Activated CD8-positive, alpha-beta T cell treated with anti-CD3 and anti-CD28 coated beads for 36 hours (primary cell): ENCODE measurements at regions of chr6 and their contacts with region 1.

Region 1: GRCh38 chr6:37018198-37019064 is 13.0 kb downstream of the FGD2 start:
- DNase-seq: peak; percentile 96
- ATAC-seq: peak; percentile 95
- H3K4me3 Mint-ChIP-seq: peak overlapping the region; percentile 26
- H3K27ac Mint-ChIP-seq: peak overlapping the region; percentile 66
- H3K4me1 Mint-ChIP-seq: peaks cover 40% of the 10 kb centered on the region
- H3K27me3 Mint-ChIP-seq: no peaks in the 10 kb centered on the region
- CTCF ChIP-seq: peak; percentile 99

Region 2: GRCh38 chr6:36780442-36781177 is 237.8 kb before region 1 on chr6:
- CTCF ChIA-PET with region 1: interaction called, 25 read pairs
- POLR2A ChIA-PET with region 1: no interaction called
- intact Hi-C with region 1: no loop called
- DNase-seq: no peak
- ATAC-seq: no peak
- H3K4me3 Mint-ChIP-seq: no peak overlapping the region
- H3K27ac Mint-ChIP-seq: no peak overlapping the region
- H3K4me1 Mint-ChIP-seq: peaks cover 2% of the 10 kb centered on the region
- H3K27me3 Mint-ChIP-seq: peaks cover 1% of the 10 kb centered on the region
- CTCF ChIP-seq: no peak

Region 3: DNA sequence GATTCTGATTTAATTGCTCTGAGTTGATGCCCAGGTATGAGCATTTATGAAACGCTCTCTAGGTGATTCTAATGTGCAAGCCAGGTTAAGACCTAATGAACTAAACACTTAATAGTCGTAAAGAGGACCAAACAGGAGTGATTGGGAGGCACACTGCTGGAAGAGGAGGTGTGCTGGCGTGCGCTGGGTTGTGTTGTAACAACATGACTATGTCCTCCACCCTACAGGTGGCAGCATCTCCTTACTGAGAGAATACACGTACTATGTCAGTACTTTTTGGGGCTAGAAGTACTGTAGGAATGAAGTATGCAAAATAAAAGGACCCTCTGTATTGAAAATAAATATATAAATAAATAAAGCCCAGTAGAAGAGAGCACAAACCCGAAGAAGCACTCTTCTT is 120.8 kb before region 1 on chr6:
- CTCF ChIA-PET with region 1: interaction called, 16 read pairs
- POLR2A ChIA-PET with region 1: no interaction called
- intact Hi-C with region 1: no loop called
- DNase-seq: peak; percentile 37
- ATAC-seq: peak; percentile 53
- H3K4me3 Mint-ChIP-seq: no peak overlapping the region
- H3K27ac Mint-ChIP-seq: no peak overlapping the region
- H3K4me1 Mint-ChIP-seq: peaks cover 3% of the 10 kb centered on the region
- H3K27me3 Mint-ChIP-seq: no peaks in the 10 kb centered on the region
- CTCF ChIP-seq: peak; percentile 28

Region 4: DNA sequence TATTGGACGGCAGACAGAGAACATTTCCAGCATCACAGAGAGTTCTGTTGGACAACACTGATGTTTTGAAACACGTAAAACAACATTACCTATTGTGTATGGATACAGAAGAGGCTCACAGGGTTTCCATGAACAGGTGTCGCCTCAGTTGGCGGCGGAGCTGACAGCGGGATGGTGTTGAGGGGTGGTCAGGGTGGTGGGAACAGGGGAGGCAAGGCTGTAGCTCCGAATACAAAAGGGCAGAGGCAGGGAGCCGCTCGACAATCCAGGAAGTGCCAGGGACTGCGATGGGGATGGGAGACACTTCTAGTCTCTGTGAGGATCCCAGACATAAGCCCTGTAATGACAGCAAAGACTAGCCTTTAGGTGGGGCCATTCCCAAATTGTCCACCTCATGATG is 78.4 kb before region 1 on chr6:
- CTCF ChIA-PET with region 1: no interaction called
- POLR2A ChIA-PET with region 1: no interaction called
- intact Hi-C with region 1: no loop called
- DNase-seq: no peak
- ATAC-seq: no peak
- H3K4me3 Mint-ChIP-seq: no peak overlapping the region
- H3K27ac Mint-ChIP-seq: no peak overlapping the region
- H3K4me1 Mint-ChIP-seq: peaks cover 4% of the 10 kb centered on the region
- H3K27me3 Mint-ChIP-seq: no peaks in the 10 kb centered on the region
- CTCF ChIP-seq: no peak

Region 5: GRCh38 chr6:37005061-37005810 is 13.2 kb before region 1 on chr6 and contains the start of gene FGD2:
- CTCF ChIA-PET with region 1: interaction called, 30 read pairs
- POLR2A ChIA-PET with region 1: interaction called, 5 read pairs
- intact Hi-C with region 1: no loop called
- DNase-seq: no peak
- ATAC-seq: peak; percentile 46
- H3K4me3 Mint-ChIP-seq: no peak within 1 kb of the TSS
- H3K27ac Mint-ChIP-seq: no peak within 1 kb of the TSS
- H3K4me1 Mint-ChIP-seq: peaks cover 14% of the 10 kb centered on the region
- H3K27me3 Mint-ChIP-seq: no peaks in the 10 kb centered on the region
- CTCF ChIP-seq: no peak
- total RNA-seq, gene FGD2: 1.4 to 1.6 TPM

Region 6: GRCh38 chr6:37119387-37119886 is 101.0 kb after region 1 on chr6:
- CTCF ChIA-PET with region 1: no interaction called
- POLR2A ChIA-PET with region 1: no interaction called
- intact Hi-C with region 1: no loop called
- DNase-seq: no peak
- ATAC-seq: no peak
- H3K4me3 Mint-ChIP-seq: no peak overlapping the region
- H3K27ac Mint-ChIP-seq: no peak overlapping the region
- H3K4me1 Mint-ChIP-seq: no peaks in the 10 kb centered on the region
- H3K27me3 Mint-ChIP-seq: no peaks in the 10 kb centered on the region
- CTCF ChIP-seq: no peak

Region 7: GRCh38 chr6:37190159-37190535 is 171.7 kb after region 1 on chr6:
- CTCF ChIA-PET with region 1: interaction called, 19 read pairs
- POLR2A ChIA-PET with region 1: no interaction called
- intact Hi-C with region 1: no loop called
- DNase-seq: peak; percentile 52
- ATAC-seq: peak; percentile 63
- H3K4me3 Mint-ChIP-seq: no peak overlapping the region
- H3K27ac Mint-ChIP-seq: peak overlapping the region; percentile 77
- H3K4me1 Mint-ChIP-seq: peaks cover 72% of the 10 kb centered on the region
- H3K27me3 Mint-ChIP-seq: no peaks in the 10 kb centered on the region
- CTCF ChIP-seq: no peak

Region 8: DNA sequence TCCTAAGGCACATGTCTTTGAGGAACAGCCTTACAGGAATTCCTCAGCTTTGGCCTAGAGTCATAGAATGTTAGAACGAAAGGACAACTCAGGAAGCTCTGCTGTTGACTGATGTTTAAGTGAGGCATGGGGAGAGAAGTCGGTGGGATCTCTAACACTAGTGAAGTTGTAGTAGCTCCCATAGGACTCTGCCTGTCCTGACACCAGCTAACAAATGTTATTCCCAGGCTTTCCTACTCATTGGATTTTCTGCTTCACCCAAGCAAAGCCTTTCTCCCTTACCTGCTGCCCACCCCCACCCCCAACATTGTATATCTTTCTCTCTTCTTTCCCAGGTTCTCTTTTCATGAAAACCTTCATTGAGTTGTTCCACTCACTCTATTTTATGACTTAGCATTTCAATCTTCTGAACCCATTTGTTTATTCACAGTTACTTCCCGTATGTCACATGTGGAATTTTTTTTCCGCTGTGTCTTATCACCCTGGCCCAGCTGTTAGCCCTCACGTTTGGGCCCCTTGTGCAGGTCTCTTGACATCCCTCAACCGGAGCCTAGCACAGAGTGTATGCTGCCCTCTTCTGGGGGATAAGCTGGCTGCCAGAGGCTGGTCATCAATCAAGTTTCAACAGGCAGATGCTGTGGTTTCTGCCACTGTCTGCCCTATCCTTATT is 296.2 kb after region 1 on chr6:
- CTCF ChIA-PET with region 1: interaction called, 24 read pairs
- POLR2A ChIA-PET with region 1: no interaction called
- intact Hi-C with region 1: no loop called
- DNase-seq: peak; percentile 70
- ATAC-seq: peak; percentile 80
- H3K4me3 Mint-ChIP-seq: no peak overlapping the region
- H3K27ac Mint-ChIP-seq: peak overlapping the region; percentile 76
- H3K4me1 Mint-ChIP-seq: peaks cover 3% of the 10 kb centered on the region
- H3K27me3 Mint-ChIP-seq: no peaks in the 10 kb centered on the region
- CTCF ChIP-seq: peak; percentile 71